A549 (cell line): ENCODE measurements at regions of chr12 and their contacts with region 1.

Region 1: GRCh38 chr12:3299929-3300832 is 190.8 kb upstream of the PRMT8 start:
- DNase-seq: peak; percentile 74 to 91
- ATAC-seq: peak; percentile 82 to 89
- H3K4me3 ChIP-seq: peak overlapping the region; percentile 20; the same call in 1 of the 3 replicates
- H3K27ac ChIP-seq: peak overlapping the region; percentile 41 to 76; a peak in 5 of 6 replicates
- H3K4me1 ChIP-seq: peaks cover 11% of the 10 kb centered on the region; the same call in 2 of the 3 replicates
- CTCF ChIP-seq: peak; percentile 74
- EP300 ChIP-seq: no peak
- POLR2A ChIP-seq: no peak
- RAD21 ChIP-seq: peak; percentile 76 to 86

Region 2: GRCh38 chr12:3041558-3042164 is 258.5 kb before region 1 on chr12:
- CTCF ChIA-PET with region 1: no interaction called
- POLR2A ChIA-PET with region 1: no interaction called
- DNase-seq: peak; percentile 87 to 90
- ATAC-seq: peak; percentile 85 to 95
- H3K4me3 ChIP-seq: no peak overlapping the region
- H3K27ac ChIP-seq: no peak overlapping the region
- H3K4me1 ChIP-seq: no peaks in the 10 kb centered on the region
- CTCF ChIP-seq: peak; percentile 78
- EP300 ChIP-seq: no peak
- POLR2A ChIP-seq: no peak
- RAD21 ChIP-seq: peak; percentile 69 to 74

Region 3: DNA sequence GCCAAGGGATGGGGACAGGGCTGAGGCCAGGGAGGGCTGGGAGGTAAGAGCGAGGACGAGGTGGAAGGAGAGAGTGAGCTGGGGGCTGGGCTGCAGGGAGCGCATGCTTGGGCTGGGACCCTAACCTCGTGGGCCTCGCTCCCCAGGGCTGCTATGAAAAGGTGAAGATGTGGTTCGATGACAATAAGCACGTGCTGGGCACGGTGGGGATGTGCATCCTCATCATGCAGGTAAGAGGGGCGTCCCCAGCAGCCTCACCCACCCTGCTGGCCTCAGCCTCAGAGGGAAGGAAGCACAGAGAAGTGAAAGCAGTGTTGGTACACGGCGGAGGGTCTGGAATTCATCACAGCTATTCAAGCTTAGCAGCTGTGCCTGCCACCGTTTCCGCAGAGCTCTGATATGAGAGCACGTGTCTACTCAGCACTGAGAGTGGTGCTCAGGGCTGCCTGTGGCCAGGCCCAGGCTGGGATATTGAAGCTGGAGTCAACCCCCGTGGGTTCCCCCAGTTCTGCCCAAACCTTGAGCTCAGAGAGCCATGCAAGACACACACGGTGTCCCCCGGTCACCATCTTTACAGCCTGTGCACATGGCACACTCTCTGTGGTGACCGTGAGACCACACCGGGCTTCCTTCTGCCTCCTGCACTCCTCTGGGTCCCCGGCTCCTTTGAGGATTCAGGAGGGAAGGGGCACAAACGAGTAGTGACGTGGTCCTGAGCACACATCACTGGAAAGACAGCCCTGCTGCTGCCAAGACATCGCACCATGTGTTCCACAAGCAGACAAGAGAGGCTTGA is 18.4 kb before region 1 on chr12:
- CTCF ChIA-PET with region 1: interaction called, 78 read pairs
- POLR2A ChIA-PET with region 1: no interaction called
- DNase-seq: no peak
- ATAC-seq: no peak
- H3K4me3 ChIP-seq: no peak overlapping the region
- H3K27ac ChIP-seq: no peak overlapping the region
- H3K4me1 ChIP-seq: no peaks in the 10 kb centered on the region
- CTCF ChIP-seq: no peak
- EP300 ChIP-seq: no peak
- POLR2A ChIP-seq: no peak
- RAD21 ChIP-seq: no peak

Region 4: DNA sequence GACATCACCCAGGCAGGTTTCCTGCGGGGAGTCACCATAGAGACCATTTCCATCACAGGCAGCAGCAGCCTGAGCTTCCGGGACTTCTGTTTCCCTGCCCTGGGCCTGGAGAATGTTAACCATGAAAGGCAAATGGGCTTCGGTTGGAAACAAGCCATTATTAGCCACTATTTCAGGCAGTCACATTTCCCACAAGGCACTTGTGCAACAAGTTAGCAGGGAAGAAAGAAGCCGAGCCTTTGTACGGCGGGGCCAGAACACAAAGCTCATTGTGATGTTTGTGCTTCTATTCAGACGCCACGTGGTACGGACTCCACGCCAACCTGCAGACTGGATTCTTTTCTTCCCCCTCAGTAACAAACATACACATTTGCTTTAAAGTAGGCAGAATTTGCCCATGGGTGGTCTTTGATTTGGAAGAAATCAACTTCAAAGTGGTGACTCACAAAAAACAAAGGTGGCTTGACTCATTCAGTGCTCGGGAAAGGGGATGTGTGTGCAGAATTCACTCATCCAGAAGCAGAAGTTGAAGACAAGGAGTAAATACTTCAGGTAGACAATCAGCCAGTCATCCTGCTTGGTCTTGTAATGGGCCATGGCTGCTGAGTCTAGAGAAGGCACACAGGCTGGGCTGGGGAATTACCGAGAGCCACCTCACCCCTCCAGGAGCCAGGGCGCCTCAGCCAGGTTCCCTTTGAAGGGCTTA is 36.6 kb after region 1 on chr12:
- CTCF ChIA-PET with region 1: interaction called, 22 read pairs
- POLR2A ChIA-PET with region 1: no interaction called
- DNase-seq: no peak
- ATAC-seq: no peak
- H3K4me3 ChIP-seq: no peak overlapping the region
- H3K27ac ChIP-seq: no peak overlapping the region
- H3K4me1 ChIP-seq: no peaks in the 10 kb centered on the region
- CTCF ChIP-seq: no peak
- EP300 ChIP-seq: no peak
- POLR2A ChIP-seq: no peak
- RAD21 ChIP-seq: no peak

Region 5: DNA sequence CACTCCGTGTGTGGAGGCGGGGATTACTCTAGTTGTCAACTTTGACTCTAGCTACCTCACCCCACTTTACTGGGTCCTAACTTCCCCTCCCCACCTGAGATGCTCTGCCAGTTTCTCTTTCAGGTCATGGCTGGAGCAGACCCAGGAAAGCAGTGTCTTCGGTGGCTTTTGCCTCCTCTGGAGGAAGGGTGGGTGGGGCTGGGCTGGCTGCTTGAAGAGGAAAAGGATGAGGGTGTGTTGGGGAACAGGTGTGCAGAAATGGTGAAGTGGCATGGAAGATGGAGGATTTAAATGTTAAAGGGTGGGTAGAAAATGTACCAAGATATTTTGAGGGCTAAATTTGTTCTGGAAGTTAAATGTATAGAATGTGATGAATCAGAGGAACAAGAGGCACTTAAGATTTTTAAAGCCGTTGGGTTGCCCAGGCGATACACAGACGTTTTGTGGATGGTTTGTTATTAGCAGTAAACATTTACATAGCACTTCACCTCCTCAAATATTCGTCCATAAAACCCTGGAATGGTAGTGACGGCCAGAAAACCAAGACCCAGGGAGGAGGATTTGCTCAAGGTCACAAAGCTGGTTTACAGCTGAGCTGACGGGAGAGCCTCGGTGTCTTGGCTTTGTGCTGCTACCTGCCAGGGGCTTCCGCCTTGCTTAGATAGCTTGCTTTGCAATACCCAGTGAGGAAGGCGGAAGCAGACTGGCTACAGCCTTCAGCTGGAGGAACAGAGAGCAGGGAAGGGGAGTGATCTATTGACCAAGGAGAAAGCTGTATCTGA is 118.6 kb after region 1 on chr12:
- CTCF ChIA-PET with region 1: interaction called, 11 read pairs
- POLR2A ChIA-PET with region 1: no interaction called
- DNase-seq: no peak
- ATAC-seq: no peak
- H3K4me3 ChIP-seq: no peak overlapping the region
- H3K27ac ChIP-seq: no peak overlapping the region
- H3K4me1 ChIP-seq: no peaks in the 10 kb centered on the region
- CTCF ChIP-seq: no peak
- EP300 ChIP-seq: no peak
- POLR2A ChIP-seq: no peak
- RAD21 ChIP-seq: no peak

Region 6: DNA sequence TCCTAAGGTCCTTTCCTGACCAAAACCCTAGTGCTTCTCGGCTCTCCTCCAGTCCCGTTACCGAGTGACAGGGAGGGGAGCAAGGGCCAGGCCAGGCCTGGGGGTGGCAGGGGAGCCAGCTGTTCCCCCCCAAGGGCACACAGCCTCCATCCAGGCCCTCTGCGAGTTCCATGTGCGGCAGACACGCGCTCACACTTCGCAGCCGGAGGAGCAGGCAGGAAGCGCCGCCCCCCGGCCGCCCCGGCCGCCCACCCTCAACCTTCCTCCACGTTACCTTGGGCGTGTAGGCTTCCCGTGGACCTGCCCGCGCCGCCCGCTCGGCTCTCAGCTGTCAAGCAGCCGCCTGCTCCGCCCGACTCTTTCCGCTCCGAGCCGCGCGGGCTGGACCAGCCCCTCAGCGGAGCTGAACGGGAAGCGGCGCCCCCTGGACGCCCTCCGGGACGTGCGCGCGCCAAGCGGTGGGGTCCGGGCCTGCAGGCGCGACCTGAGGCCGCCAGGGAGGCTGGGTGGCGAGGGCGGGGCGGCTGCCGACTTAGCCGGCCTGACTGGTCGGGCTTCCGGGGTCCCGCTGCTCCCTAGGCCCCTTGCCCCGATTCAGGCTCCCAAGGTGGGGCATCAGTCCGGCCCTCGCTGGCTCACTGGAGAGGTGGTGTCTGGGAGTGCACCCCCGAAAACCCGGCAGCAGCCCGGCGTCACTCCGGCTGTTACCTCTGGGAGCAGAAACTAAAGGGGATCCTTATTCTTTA is 452.7 kb after region 1 on chr12 and contains the start of gene CRACR2A:
- CTCF ChIA-PET with region 1: interaction called, 18 read pairs
- POLR2A ChIA-PET with region 1: no interaction called
- DNase-seq: peak; percentile 59 to 68
- ATAC-seq: peak; percentile 91 to 98
- H3K4me3 ChIP-seq: peak within 1 kb of the TSS; percentile 41
- H3K27ac ChIP-seq: peak within 1 kb of the TSS; percentile 56 to 88
- H3K4me1 ChIP-seq: no peaks in the 10 kb centered on the region
- CTCF ChIP-seq: peak; percentile 48
- EP300 ChIP-seq: no peak
- POLR2A ChIP-seq: no peak
- RAD21 ChIP-seq: peak in 1 of 2 experiments; percentile 27; a peak in 1 of 5 replicates
- polyA plus RNA-seq, gene CRACR2A: 3.3 and 3.8 TPM in 2 replicates

Region 7: GRCh38 chr12:3797531-3798049 is 497.4 kb after region 1 on chr12:
- CTCF ChIA-PET with region 1: interaction called, 117 read pairs
- POLR2A ChIA-PET with region 1: no interaction called
- DNase-seq: no peak
- ATAC-seq: no peak
- H3K4me3 ChIP-seq: no peak overlapping the region
- H3K27ac ChIP-seq: no peak overlapping the region
- H3K4me1 ChIP-seq: no peaks in the 10 kb centered on the region
- CTCF ChIP-seq: no peak
- EP300 ChIP-seq: no peak
- POLR2A ChIP-seq: no peak
- RAD21 ChIP-seq: no peak

Region 8: GRCh38 chr12:4276524-4277204 is 976.5 kb after region 1 on chr12:
- CTCF ChIA-PET with region 1: interaction called, 19 read pairs
- POLR2A ChIA-PET with region 1: no interaction called
- DNase-seq: peak; percentile 76 to 84
- ATAC-seq: peak; percentile 58 to 84
- H3K4me3 ChIP-seq: no peak overlapping the region
- H3K27ac ChIP-seq: no peak overlapping the region
- H3K4me1 ChIP-seq: peaks cover 40% of the 10 kb centered on the region
- CTCF ChIP-seq: peak; percentile 88
- EP300 ChIP-seq: no peak
- POLR2A ChIP-seq: no peak
- RAD21 ChIP-seq: peak; percentile 90 to 96